Activated CD4-positive, alpha-beta T cell treated with anti-CD3 and anti-CD28 coated beads for 36 hours (primary cell): ENCODE measurements at regions of chr5 and their contacts with region 1.

Region 1: GRCh38 chr5:132456296-132457001 is 34.1 kb downstream of the IRF1 start:
- DNase-seq: peak; percentile 79
- ATAC-seq: peak; percentile 68
- H3K4me3 Mint-ChIP-seq: peak overlapping the region; percentile 49
- H3K27ac Mint-ChIP-seq: peak overlapping the region; percentile 96
- H3K4me1 Mint-ChIP-seq: peaks cover 90% of the 10 kb centered on the region
- H3K27me3 Mint-ChIP-seq: no peaks in the 10 kb centered on the region

Region 2: DNA sequence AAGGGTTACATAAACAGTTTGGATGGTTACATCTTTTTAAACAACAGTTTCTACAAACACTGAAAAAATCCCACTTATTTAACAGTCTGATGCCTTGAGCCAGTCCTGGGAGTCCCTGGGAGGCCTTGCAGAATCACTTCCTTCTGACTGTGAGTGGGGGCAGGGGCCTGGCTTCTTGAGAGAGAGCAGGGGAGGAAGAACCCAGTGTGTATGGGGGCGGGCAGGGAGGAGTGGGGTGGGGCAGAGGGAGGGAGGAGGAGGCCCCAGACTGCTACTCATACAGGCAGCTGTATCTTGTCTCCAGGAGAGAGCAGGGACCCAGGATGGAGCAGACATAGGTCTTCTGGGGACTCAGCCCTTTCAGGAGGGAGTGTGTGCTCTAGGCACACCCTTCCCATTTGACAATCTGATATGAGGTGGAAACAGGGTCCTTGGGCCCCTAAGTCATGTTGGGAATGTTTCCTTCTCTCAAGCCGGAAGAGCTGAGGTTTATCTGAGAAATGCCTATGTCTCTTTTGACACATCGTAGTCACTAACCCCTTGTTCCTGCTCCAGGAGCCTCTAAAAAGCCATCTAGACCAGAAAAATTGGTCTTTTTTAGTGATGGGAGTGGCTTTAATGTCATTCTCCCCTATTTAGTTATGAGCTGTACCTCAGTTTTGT is 18.7 kb before region 1 on chr5:
- CTCF ChIA-PET with region 1: interaction called, 89 read pairs
- POLR2A ChIA-PET with region 1: interaction called, 3 read pairs
- intact Hi-C with region 1: loop called in 1 of 2 experiments (anchors 2 kb)
- DNase-seq: peak; percentile 81
- ATAC-seq: peak; percentile 91
- H3K4me3 Mint-ChIP-seq: peak overlapping the region; percentile 12
- H3K27ac Mint-ChIP-seq: peak overlapping the region; percentile 65
- H3K4me1 Mint-ChIP-seq: peaks cover 79% of the 10 kb centered on the region
- H3K27me3 Mint-ChIP-seq: no peaks in the 10 kb centered on the region

Region 3: GRCh38 chr5:132466433-132467286 is 10.2 kb after region 1 on chr5:
- CTCF ChIA-PET with region 1: interaction called, 8 read pairs
- POLR2A ChIA-PET with region 1: interaction called, 11 read pairs
- intact Hi-C with region 1: loop called in 1 of 2 experiments (anchors 1 kb)
- DNase-seq: peak; percentile 78
- ATAC-seq: peak; percentile 61
- H3K4me3 Mint-ChIP-seq: peak overlapping the region; percentile 51
- H3K27ac Mint-ChIP-seq: peak overlapping the region; percentile 51
- H3K4me1 Mint-ChIP-seq: peaks cover 88% of the 10 kb centered on the region
- H3K27me3 Mint-ChIP-seq: no peaks in the 10 kb centered on the region

Region 4: GRCh38 chr5:132473019-132473531 is 16.6 kb after region 1 on chr5:
- CTCF ChIA-PET with region 1: interaction called, 4 read pairs
- POLR2A ChIA-PET with region 1: interaction called, 53 read pairs
- intact Hi-C with region 1: no loop called
- DNase-seq: peak; percentile 83
- ATAC-seq: peak; percentile 94
- H3K4me3 Mint-ChIP-seq: no peak overlapping the region
- H3K27ac Mint-ChIP-seq: peak overlapping the region; percentile 93
- H3K4me1 Mint-ChIP-seq: peaks cover 59% of the 10 kb centered on the region
- H3K27me3 Mint-ChIP-seq: no peaks in the 10 kb centered on the region

Region 5: GRCh38 chr5:132510076-132510475 is 53.6 kb after region 1 on chr5:
- CTCF ChIA-PET with region 1: no interaction called
- POLR2A ChIA-PET with region 1: no interaction called
- intact Hi-C with region 1: no loop called
- DNase-seq: no peak
- ATAC-seq: no peak
- H3K4me3 Mint-ChIP-seq: no peak overlapping the region
- H3K27ac Mint-ChIP-seq: no peak overlapping the region
- H3K4me1 Mint-ChIP-seq: no peaks in the 10 kb centered on the region
- H3K27me3 Mint-ChIP-seq: peaks cover 26% of the 10 kb centered on the region